ENCODE measurements at regions of chr1 and their contacts with region 1.

Region 1: DNA sequence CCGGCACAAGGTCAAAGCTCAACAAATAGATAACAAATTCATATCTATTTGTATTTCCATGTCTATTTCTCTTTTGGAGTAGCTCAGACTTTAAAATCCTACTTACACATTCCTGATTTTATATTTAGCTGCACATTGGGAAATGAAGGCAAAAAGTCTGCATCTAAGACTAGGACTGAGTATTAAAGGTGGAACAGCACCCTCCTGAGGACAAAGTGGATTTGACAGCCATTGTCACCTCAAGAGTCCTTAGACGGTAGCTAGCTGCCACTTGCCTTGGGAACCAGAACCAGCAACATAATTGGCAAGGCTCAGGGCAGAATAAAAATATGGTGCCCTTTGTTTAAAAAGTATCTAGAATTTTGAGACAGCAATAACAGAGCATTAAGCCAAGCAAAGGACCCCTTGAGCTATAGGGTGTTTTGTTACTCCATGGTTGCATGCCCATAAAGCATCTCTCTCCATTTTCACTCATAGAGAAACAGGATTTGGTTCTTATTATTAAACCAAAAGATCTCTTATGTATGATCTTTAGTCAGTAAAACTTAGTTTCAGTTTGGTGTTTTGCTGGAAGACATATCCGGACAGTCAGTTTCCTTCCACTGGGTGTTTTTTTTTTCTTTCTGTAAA is 30.0 kb upstream of the SGIP1 start:
- DNase-seq: peak; percentile 79
- H3K4me3 ChIP-seq: no peak overlapping the region
- H3K27ac ChIP-seq: no peak overlapping the region
- H3K4me1 ChIP-seq: peaks cover 10% of the 10 kb centered on the region
- H3K27me3 ChIP-seq: no peaks in the 10 kb centered on the region
- CTCF ChIP-seq: peak; percentile 87

Region 2: GRCh38 chr1:65958561-65959350 is 545.2 kb before region 1 on chr1:
- CTCF ChIA-PET with region 1: interaction called, 3 read pairs
- POLR2A ChIA-PET with region 1: no interaction called
- intact Hi-C with region 1: loop called (anchors 5 kb)
- DNase-seq: peak; percentile 75
- H3K4me3 ChIP-seq: no peak overlapping the region
- H3K27ac ChIP-seq: no peak overlapping the region
- H3K4me1 ChIP-seq: no peaks in the 10 kb centered on the region
- H3K27me3 ChIP-seq: no peaks in the 10 kb centered on the region
- CTCF ChIP-seq: peak; percentile 75

Region 3: DNA sequence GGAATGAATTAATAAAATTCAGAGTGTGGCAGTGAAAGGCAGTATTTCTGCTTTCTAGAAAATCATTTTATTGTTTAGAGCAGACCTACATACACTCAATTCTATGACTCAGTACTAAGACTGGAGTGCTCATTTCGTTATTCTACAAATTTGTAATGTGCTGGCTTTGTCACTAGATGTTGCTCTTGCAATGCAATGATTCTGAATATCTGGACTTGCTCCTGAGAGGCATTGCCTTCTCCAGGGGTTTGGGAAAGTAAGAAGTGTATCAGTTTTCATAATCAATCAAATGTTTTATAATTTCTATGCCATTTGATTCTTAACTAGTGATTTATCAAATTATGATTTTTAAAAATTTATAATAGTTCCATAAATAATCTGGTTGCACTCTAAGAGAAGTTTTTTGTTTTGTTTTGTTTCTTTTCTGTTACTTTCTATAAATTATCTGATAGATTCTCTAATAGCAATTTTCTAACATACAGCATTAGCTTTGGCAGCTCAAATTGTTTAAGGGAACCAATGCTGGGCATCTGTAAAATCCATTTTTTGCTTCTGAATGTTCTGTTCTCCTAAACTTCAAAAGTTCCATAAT is 250.5 kb before region 1 on chr1:
- CTCF ChIA-PET with region 1: no interaction called
- POLR2A ChIA-PET with region 1: no interaction called
- intact Hi-C with region 1: loop called (anchors 2 kb)
- DNase-seq: peak; percentile 82
- H3K4me3 ChIP-seq: no peak overlapping the region
- H3K27ac ChIP-seq: no peak overlapping the region
- H3K4me1 ChIP-seq: peaks cover 42% of the 10 kb centered on the region
- H3K27me3 ChIP-seq: no peaks in the 10 kb centered on the region
- CTCF ChIP-seq: peak; percentile 81

Region 4: GRCh38 chr1:66452162-66452561 is 51.8 kb before region 1 on chr1:
- CTCF ChIA-PET with region 1: interaction called, 3 read pairs
- POLR2A ChIA-PET with region 1: no interaction called
- intact Hi-C with region 1: loop called (anchors 5 kb)
- DNase-seq: no peak
- H3K4me3 ChIP-seq: no peak overlapping the region
- H3K27ac ChIP-seq: no peak overlapping the region
- H3K4me1 ChIP-seq: peaks cover 10% of the 10 kb centered on the region
- H3K27me3 ChIP-seq: no peaks in the 10 kb centered on the region
- CTCF ChIP-seq: 0 out of 2 replicates have a peak, but pooled peaks have one; percentile 20

Region 5: GRCh38 chr1:66725885-66726665 is 222.1 kb after region 1 on chr1:
- CTCF ChIA-PET with region 1: no interaction called
- POLR2A ChIA-PET with region 1: no interaction called
- intact Hi-C with region 1: loop called (anchors 1 kb)
- DNase-seq: peak; percentile 89
- H3K4me3 ChIP-seq: no peak overlapping the region
- H3K27ac ChIP-seq: no peak overlapping the region
- H3K4me1 ChIP-seq: peaks cover 19% of the 10 kb centered on the region
- H3K27me3 ChIP-seq: no peaks in the 10 kb centered on the region
- CTCF ChIP-seq: peak; percentile 97